A673 (cell line): ENCODE measurements at regions of chr17 and their contacts with region 1.

Region 1: GRCh38 chr17:73163043-73163442 is 1.8 kb upstream of the SSTR2 start:
- DNase-seq: no peak
- H3K4me3 ChIP-seq: no peak overlapping the region
- H3K27ac ChIP-seq: no peak overlapping the region
- H3K4me1 ChIP-seq: peaks cover 16% of the 10 kb centered on the region
- H3K27me3 ChIP-seq: peaks cover 59% of the 10 kb centered on the region
- CTCF ChIP-seq: no peak

Region 2: GRCh38 chr17:73091770-73092522 is 71.1 kb before region 1 on chr17:
- CTCF ChIA-PET with region 1: no interaction called
- POLR2A ChIA-PET with region 1: no interaction called
- intact Hi-C with region 1: no loop called
- DNase-seq: peak; percentile 20
- H3K4me3 ChIP-seq: peak overlapping the region; percentile 54
- H3K27ac ChIP-seq: no peak overlapping the region
- H3K4me1 ChIP-seq: peaks cover 7% of the 10 kb centered on the region
- H3K27me3 ChIP-seq: no peaks in the 10 kb centered on the region
- CTCF ChIP-seq: no peak

Region 3: DNA sequence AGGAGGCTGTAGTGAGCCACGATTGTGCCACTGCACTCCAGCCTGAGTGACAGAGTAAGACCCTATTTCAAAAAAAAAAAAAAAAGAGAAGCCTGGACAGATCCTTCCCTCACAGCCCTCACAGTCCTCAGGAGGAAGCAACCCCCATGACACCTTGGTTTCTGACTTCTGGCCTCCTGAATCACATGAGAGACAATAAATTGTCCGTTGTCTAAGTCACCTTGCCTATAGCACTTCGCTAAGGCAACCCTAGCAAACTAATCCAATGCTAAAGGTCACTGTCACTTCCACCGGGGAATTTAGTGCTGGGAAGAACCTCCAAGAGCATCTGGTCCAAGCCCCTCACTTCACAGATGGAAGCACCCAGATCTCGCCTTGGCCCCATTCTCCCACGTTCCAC is 51.7 kb before region 1 on chr17:
- CTCF ChIA-PET with region 1: no interaction called
- POLR2A ChIA-PET with region 1: no interaction called
- intact Hi-C with region 1: loop called (anchors 5 kb)
- DNase-seq: no peak
- H3K4me3 ChIP-seq: no peak overlapping the region
- H3K27ac ChIP-seq: no peak overlapping the region
- H3K4me1 ChIP-seq: no peaks in the 10 kb centered on the region
- H3K27me3 ChIP-seq: no peaks in the 10 kb centered on the region
- CTCF ChIP-seq: no peak

Region 4: DNA sequence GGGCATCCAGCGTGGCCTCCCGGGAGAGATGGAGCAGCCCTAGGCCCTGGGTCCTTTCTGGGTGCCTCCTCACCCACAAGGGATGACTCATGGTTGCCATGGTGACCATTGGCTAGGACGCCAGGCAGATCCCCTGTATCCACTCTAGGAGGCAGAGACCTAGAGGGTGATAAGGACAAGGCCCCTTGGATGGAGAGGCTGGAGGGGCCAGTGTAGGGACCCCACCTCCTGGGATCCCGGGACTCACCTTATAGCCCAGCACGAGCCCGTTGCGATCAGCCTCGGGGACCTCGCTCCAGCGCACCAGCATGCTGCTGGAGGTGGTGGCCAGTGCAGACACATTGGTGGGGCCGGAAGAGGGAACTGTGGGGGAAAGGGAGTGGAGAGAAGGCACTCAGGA is 230.9 kb after region 1 on chr17:
- CTCF ChIA-PET with region 1: no interaction called
- POLR2A ChIA-PET with region 1: no interaction called
- intact Hi-C with region 1: no loop called
- DNase-seq: peak; percentile 40
- H3K4me3 ChIP-seq: no peak overlapping the region
- H3K27ac ChIP-seq: no peak overlapping the region
- H3K4me1 ChIP-seq: no peaks in the 10 kb centered on the region
- H3K27me3 ChIP-seq: no peaks in the 10 kb centered on the region
- CTCF ChIP-seq: no peak

Region 5: DNA sequence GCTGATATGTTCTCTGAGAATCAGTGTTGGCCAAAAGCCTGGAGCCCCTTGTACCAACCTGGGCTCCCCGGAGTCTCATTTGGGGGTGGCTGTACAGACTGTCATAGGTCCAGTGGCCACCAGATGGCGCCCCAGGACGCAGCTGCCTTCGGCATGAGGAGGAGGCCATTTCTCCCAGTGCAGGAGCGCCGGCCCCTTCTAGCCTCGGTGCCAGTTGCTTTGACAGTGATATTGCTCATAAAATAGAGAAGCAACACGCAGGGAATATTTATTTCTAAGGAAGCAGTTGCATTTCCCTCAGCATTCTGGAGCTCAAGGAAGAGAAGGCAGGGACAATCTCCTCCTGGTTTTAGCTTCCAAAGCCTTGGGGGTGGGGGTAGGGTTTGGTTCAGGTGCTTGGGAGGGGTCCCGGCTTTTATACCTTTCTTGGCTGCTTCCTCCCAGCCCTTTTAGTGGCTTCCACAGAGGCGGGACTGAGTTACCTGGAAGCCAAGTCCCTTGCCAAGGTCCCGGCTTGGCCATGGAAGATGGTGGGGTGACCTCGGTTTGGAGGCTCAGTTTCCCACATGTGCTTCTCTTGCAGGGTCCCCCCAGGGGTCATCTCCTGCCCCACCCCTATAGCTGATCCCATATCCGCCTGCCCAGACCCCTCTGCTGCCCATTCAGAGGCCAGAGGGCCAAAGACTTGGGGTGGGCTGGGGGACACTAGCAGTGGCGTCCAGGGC is 266.6 kb after region 1 on chr17:
- CTCF ChIA-PET with region 1: no interaction called
- POLR2A ChIA-PET with region 1: no interaction called
- intact Hi-C with region 1: no loop called
- DNase-seq: peak; percentile 87
- H3K4me3 ChIP-seq: no peak overlapping the region
- H3K27ac ChIP-seq: no peak overlapping the region
- H3K4me1 ChIP-seq: peaks cover 15% of the 10 kb centered on the region
- H3K27me3 ChIP-seq: no peaks in the 10 kb centered on the region
- CTCF ChIP-seq: peak; percentile 97